HCT116 (cell line): ENCODE measurements at regions of chr16 and their contacts with region 1.

Region 1: GRCh38 chr16:75789237-75789636 is 62.9 kb upstream of the CPHXL start:
- DNase-seq: peak; percentile 46
- ATAC-seq: peak; percentile 77
- H3K4me3 ChIP-seq: no peak overlapping the region
- H3K27ac ChIP-seq: no peak overlapping the region
- H3K4me1 ChIP-seq: no peaks in the 10 kb centered on the region
- H3K27me3 ChIP-seq: peaks cover 5% of the 10 kb centered on the region; the same call in 1 of the 2 replicates
- CTCF ChIP-seq: peak; percentile 57 to 88 (median 72); a peak in 5 of 6 replicates
- POLR2A ChIP-seq: no peak
- RAD21 ChIP-seq: peak; percentile 87

Region 2: DNA sequence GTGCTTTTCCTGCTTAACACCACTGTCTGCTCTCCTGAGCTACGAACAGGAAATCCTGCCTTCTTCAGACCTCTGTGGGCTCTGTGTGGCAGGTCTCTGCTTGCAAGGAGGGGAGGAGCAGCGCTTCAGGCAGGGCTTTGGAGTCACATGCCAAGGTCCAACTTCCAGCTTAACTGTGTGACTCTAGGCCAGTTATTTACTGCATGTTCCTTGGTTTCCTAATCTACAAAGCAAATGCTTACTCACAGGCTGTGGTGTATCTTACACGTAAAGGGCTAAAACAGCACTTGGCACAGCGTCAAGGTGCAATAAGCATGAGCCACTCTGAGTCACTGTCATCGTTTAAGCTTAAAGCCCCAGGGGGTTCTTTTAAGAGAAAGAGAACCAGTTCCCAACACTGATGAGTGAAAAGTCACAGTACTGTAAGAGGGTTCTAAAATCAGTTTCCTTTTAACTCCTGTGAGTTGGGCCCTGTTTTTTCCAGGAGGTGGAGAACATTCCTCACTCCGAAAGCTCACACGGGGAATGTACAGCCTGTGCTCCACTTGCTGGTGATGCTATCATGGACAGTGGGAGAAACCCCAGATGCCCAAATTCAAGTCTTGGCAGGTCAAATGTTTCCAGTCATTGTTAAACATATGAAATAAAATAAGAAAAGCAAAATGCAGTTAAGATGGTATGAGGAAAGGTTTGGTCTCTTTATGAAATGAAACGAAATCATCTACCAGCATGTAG is 483.7 kb before region 1 on chr16:
- CTCF ChIA-PET with region 1: no interaction called
- POLR2A ChIA-PET with region 1: no interaction called
- RAD21 ChIA-PET with region 1: no interaction called
- intact Hi-C with region 1: no loop called
- DNase-seq: peak; percentile 100
- ATAC-seq: peak; percentile 94
- H3K4me3 ChIP-seq: peak overlapping the region in 1 of 2 experiments; percentile 41; a peak in 3 of 4 replicates
- H3K27ac ChIP-seq: peak overlapping the region; percentile 100
- H3K4me1 ChIP-seq: peaks cover 43 to 65% of the 10 kb centered on the region in 2 experiments
- H3K27me3 ChIP-seq: no peaks in the 10 kb centered on the region
- CTCF ChIP-seq: no peak
- POLR2A ChIP-seq: peak; percentile 34
- RAD21 ChIP-seq: peak; percentile 40

Region 3: DNA sequence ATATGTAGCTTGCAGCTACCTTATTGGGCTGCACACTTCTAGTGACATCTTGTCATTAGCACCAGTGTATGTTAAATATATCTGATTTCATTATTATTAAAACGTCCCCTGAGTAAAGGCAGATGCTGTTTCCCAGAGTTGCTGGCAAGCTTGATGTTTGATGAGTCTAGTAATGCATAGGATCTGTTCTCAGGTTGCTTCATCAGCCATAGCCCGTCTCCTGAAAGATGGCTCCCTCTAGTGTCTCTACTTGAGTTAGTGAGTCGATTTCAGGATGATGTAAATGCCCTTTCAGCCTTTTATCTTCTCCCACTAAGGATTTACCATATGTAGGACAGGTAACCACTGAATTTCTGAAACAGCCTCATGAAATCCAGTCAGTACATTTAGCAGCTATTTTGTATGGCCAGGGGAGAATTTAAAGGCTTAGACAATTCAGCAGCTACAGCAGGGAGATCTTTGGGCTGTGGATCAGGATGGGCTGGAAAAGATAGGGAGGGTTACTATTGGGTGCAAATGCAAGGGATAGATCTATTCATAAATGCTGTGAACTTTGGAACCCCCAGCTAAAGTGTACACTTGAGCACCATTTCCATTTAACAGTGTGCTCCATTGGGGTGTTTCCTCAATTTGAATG is 864.3 kb after region 1 on chr16:
- CTCF ChIA-PET with region 1: no interaction called
- POLR2A ChIA-PET with region 1: no interaction called
- RAD21 ChIA-PET with region 1: no interaction called
- intact Hi-C with region 1: loop called (anchors 10 kb)
- DNase-seq: no peak
- ATAC-seq: no peak
- H3K4me3 ChIP-seq: no peak overlapping the region
- H3K27ac ChIP-seq: no peak overlapping the region
- H3K4me1 ChIP-seq: no peaks in the 10 kb centered on the region
- H3K27me3 ChIP-seq: no peaks in the 10 kb centered on the region
- CTCF ChIP-seq: peak in 2 of 3 experiments; percentile 18 to 50; a peak in 3 of 6 replicates
- POLR2A ChIP-seq: no peak
- RAD21 ChIP-seq: peak; percentile 46

Region 4: GRCh38 chr16:77043076-77043475 is 1253.8 kb after region 1 on chr16:
- CTCF ChIA-PET with region 1: no interaction called
- POLR2A ChIA-PET with region 1: no interaction called
- RAD21 ChIA-PET with region 1: no interaction called
- intact Hi-C with region 1: loop called (anchors 5 kb)
- DNase-seq: peak; percentile 8
- ATAC-seq: peak; percentile 54
- H3K4me3 ChIP-seq: no peak overlapping the region
- H3K27ac ChIP-seq: no peak overlapping the region
- H3K4me1 ChIP-seq: no peaks in the 10 kb centered on the region
- H3K27me3 ChIP-seq: peaks cover 10% of the 10 kb centered on the region; the same call in 1 of the 2 replicates
- CTCF ChIP-seq: peak; percentile 8 to 53 (median 38); a peak in 4 of 6 replicates
- POLR2A ChIP-seq: no peak
- RAD21 ChIP-seq: peak; percentile 51